Panc1 (cell line): ENCODE measurements at regions of chr9 and their contacts with region 1.

Region 1: DNA sequence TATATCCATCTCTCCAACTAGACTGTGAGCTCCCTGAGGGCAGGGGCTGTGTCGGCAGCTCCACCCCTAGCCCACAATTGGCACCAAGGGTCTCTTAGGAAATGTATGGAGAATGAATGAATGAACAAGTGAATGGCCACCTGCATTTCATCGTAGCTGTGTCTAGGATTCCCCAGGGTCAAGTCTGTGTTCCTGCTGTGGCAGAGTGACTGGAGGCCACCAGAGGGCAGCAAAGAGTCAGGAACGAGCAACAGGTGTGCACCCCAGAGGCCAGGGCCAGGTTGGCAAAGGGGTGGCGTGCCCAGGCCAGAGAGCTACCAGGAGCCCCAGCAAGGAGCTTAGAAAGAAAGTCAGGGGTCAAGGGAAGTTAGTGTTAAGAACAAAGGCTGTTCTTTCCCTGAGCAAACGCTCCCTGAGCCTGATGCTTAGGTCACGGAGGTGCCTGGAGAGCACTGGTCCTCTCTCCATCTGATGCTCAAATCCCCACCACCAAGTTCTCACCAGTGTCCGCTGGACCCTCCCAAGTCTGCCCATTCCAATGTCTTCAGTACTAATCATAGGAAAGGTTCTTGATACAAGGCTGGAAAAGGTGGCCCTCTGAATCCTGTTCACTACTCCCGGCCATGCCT is 160.7 kb downstream of the PAX5 start:
- DNase-seq: peak; percentile 61
- ATAC-seq: peak; percentile 96
- H3K4me3 ChIP-seq: no peak overlapping the region
- H3K27ac ChIP-seq: no peak overlapping the region
- H3K4me1 ChIP-seq: peaks cover 4% of the 10 kb centered on the region; the same call in 1 of the 2 replicates
- H3K27me3 ChIP-seq: no peaks in the 10 kb centered on the region; the same call in 1 of the 2 replicates
- CTCF ChIP-seq: no peak

Region 2: DNA sequence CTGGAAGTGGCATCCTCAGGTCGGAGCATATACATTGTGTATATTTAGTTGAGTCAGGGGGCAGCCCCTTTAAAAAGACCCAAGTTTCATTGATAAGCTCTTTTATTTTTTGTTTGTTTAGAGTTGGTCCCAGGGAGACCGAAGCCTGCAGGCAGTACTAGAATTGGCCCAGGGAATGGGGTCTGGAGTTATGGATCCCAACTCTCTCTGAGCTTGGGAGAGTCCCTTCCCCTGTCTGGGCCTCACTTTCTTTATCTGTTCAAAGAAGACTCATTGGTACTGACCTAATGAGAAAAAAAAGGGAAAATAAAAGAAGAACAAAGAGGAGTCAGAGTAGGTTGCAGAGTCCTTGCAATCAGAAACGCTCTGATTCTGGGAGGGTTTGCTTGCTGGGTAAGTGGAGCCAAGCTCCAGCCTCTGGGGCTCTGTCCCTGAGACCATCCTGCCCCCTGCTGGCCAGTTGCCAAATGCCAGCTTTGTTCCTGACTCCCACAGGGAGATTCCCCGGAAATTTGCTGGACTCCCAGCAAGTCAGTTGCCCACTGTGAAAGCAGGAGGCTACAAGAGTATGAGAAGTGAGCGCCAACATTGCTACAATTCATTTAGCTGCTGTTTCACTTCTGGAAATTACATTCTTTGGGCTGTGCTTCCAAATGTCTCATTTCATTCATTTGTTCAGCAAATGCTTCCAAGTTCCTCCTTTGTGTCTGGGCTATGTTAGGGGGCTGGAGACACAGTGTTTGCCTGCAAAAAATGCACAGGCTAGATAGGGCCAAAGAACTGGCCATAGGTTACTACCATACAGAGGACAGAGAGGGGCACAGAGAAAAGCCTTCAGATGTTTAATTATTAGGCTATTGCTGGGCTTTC is 144.5 kb before region 1 on chr9:
- CTCF ChIA-PET with region 1: no interaction called
- POLR2A ChIA-PET with region 1: no interaction called
- in situ Hi-C with region 1: no loop called
- intact Hi-C with region 1: no loop called
- DNase-seq: peak; percentile 63
- ATAC-seq: peak; percentile 96
- H3K4me3 ChIP-seq: no peak overlapping the region
- H3K27ac ChIP-seq: no peak overlapping the region
- H3K4me1 ChIP-seq: no peaks in the 10 kb centered on the region
- H3K27me3 ChIP-seq: no peaks in the 10 kb centered on the region; the same call in 1 of the 2 replicates
- CTCF ChIP-seq: no peak

Region 3: DNA sequence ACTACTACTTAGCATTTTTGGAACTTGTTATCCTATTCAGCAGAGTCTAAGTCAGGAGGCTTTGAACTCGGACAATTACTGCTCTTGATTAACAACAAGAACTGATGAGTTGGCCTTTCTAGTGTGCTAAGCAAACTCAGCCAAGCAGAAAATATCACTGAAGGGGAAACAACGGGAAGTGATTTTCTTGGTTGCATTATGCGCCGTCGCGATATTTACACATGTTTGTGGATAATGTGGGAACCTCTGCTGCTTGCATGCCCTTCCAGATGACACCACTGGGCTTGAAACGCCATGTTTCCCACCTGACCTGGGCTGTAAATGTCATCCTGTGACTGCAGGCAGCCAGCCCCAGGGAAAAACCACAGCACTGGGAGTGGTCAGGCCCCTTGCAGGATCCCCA is 44.7 kb before region 1 on chr9:
- CTCF ChIA-PET with region 1: no interaction called
- POLR2A ChIA-PET with region 1: no interaction called
- in situ Hi-C with region 1: no loop called
- intact Hi-C with region 1: no loop called
- DNase-seq: no peak
- ATAC-seq: no peak
- H3K4me3 ChIP-seq: no peak overlapping the region
- H3K27ac ChIP-seq: no peak overlapping the region
- H3K4me1 ChIP-seq: no peaks in the 10 kb centered on the region
- H3K27me3 ChIP-seq: peaks cover under 1% of the 10 kb centered on the region
- CTCF ChIP-seq: no peak

Region 4: DNA sequence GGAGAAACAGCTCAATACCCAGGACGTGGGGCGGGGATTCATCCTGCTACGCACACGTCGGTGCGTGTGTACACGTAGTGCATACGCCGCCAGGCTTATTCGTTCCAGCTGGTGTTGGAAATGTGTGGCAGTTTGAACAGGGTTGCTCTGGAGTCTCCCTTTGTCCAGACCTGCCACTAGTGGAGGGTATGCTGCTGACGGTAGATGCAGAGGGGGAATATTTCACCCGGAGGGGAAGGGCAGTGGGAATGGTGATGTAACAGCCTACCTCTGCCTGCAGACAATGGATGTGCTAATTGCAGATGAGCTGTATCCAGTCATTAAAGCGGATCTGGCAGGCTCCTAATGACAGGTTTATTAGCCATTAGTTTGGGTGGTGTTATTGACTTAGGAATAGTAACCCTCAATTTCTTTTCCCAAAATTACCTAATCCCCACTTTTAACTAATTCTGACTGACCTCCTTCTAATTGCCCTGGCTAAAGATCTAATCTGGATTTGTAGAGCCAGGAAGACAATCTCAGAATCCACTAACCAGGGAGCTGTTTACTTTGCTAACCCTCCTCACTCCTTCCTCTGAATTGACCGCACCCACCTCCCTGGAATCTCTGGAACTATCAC is 18.1 kb after region 1 on chr9:
- CTCF ChIA-PET with region 1: interaction called, 11 read pairs
- POLR2A ChIA-PET with region 1: no interaction called
- in situ Hi-C with region 1: no loop called
- intact Hi-C with region 1: no loop called
- DNase-seq: no peak
- ATAC-seq: no peak
- H3K4me3 ChIP-seq: no peak overlapping the region
- H3K27ac ChIP-seq: no peak overlapping the region
- H3K4me1 ChIP-seq: no peaks in the 10 kb centered on the region
- H3K27me3 ChIP-seq: peaks cover 5% of the 10 kb centered on the region; the same call in 1 of the 2 replicates
- CTCF ChIP-seq: no peak

Region 5: GRCh38 chr9:36924071-36924470 is 50.7 kb after region 1 on chr9:
- CTCF ChIA-PET with region 1: no interaction called
- POLR2A ChIA-PET with region 1: no interaction called
- in situ Hi-C with region 1: no loop called
- intact Hi-C with region 1: no loop called
- DNase-seq: peak; percentile 87
- ATAC-seq: peak; percentile 74
- H3K4me3 ChIP-seq: no peak overlapping the region
- H3K27ac ChIP-seq: peak overlapping the region; percentile 73
- H3K4me1 ChIP-seq: peaks cover 51% of the 10 kb centered on the region
- H3K27me3 ChIP-seq: no peaks in the 10 kb centered on the region
- CTCF ChIP-seq: no peak

Region 6: GRCh38 chr9:36987891-36988290 is 114.5 kb after region 1 on chr9:
- CTCF ChIA-PET with region 1: interaction called, 22 read pairs
- POLR2A ChIA-PET with region 1: interaction called, 3 read pairs
- in situ Hi-C with region 1: no loop called
- intact Hi-C with region 1: loop called (anchors 1 kb)
- DNase-seq: no peak
- ATAC-seq: 0 out of 2 replicates have a peak, but pooled peaks have one; percentile 29
- H3K4me3 ChIP-seq: no peak overlapping the region
- H3K27ac ChIP-seq: no peak overlapping the region
- H3K4me1 ChIP-seq: no peaks in the 10 kb centered on the region; the same call in 1 of the 2 replicates
- H3K27me3 ChIP-seq: peaks cover 19% of the 10 kb centered on the region
- CTCF ChIP-seq: no peak

Region 7: DNA sequence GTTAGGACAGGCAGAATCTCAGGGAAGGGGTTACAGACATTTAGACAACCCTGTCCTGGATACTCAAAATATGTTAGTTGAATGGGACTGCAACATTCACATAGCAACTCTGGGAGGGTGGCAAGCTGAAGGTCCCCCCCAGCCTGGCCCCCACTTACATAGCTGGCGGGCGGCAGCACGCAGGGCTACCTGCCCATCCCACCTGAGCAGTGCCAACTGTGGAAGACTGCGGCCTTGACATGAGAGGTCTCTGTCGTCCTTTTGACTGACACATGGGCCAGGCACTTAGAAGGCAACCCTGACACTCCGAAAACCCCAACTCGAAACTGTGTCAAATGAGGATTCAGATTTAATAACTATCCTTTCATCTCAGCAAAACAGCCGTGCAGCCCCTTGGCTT is 144.2 kb after region 1 on chr9:
- CTCF ChIA-PET with region 1: no interaction called
- POLR2A ChIA-PET with region 1: no interaction called
- in situ Hi-C with region 1: no loop called
- intact Hi-C with region 1: no loop called
- DNase-seq: no peak
- ATAC-seq: no peak
- H3K4me3 ChIP-seq: no peak overlapping the region
- H3K27ac ChIP-seq: no peak overlapping the region
- H3K4me1 ChIP-seq: no peaks in the 10 kb centered on the region
- H3K27me3 ChIP-seq: peaks cover 72% of the 10 kb centered on the region
- CTCF ChIP-seq: no peak

Region 8: DNA sequence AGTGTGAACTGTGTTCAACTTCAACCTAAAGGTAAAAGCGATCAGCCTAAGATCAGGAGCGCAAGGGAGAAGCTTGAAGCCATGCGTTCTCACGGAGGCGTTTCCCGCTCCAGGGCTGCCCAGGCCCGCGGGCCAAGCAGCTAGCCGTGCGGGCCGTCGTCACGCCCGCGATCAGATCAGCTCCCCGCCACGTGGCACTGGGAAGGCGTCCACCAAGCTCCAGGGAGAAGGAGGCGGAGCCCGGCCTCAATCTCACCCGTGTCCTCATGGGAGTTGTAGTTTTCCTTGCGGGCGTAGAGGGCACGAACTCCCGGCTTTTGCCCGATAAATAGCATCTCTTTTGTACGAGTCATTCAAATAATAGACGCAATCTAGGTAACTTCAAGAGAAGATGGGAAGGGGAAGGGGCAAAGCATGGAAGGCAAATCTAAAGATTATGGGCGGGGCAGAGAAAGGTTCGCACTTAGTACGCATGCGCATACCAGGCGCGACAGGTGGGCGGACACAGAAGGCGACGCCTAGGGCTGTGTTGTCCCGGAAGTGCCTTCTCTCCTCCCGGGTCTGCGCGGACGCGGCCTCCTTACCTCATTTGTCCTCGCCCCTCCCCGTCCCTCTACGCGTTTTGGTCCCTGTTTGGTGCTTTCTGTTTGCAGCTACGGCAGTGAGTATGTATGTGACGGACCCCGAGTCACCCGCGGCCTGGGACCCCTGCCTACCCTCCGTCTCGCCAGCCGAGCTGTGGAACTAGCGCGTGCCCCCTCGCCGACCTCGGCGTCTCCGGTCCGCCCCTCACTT is 206.2 kb after region 1 on chr9:
- CTCF ChIA-PET with region 1: no interaction called
- POLR2A ChIA-PET with region 1: no interaction called
- in situ Hi-C with region 1: no loop called
- intact Hi-C with region 1: loop called (anchors 10 kb)
- DNase-seq: peak; percentile 94
- ATAC-seq: peak; percentile 99
- H3K4me3 ChIP-seq: peak overlapping the region; percentile 71 to 89
- H3K27ac ChIP-seq: peak overlapping the region; percentile 92
- H3K4me1 ChIP-seq: peaks cover 14% of the 10 kb centered on the region; the same call in 1 of the 2 replicates
- H3K27me3 ChIP-seq: no peaks in the 10 kb centered on the region
- CTCF ChIP-seq: no peak

Region 9: GRCh38 chr9:37415011-37415719 is 541.8 kb after region 1 on chr9:
- CTCF ChIA-PET with region 1: interaction called, 10 read pairs
- POLR2A ChIA-PET with region 1: no interaction called
- in situ Hi-C with region 1: no loop called
- intact Hi-C with region 1: no loop called
- DNase-seq: peak; percentile 80
- ATAC-seq: peak; percentile 76
- H3K4me3 ChIP-seq: peak overlapping the region in 1 of 2 experiments; percentile 29; a peak in 2 of 4 replicates
- H3K27ac ChIP-seq: peak overlapping the region; percentile 84
- H3K4me1 ChIP-seq: peaks cover 43% of the 10 kb centered on the region
- H3K27me3 ChIP-seq: no peaks in the 10 kb centered on the region
- CTCF ChIP-seq: no peak